Panc1 (cell line): ENCODE measurements at regions of chr5 and their contacts with region 1.

Region 1: DNA sequence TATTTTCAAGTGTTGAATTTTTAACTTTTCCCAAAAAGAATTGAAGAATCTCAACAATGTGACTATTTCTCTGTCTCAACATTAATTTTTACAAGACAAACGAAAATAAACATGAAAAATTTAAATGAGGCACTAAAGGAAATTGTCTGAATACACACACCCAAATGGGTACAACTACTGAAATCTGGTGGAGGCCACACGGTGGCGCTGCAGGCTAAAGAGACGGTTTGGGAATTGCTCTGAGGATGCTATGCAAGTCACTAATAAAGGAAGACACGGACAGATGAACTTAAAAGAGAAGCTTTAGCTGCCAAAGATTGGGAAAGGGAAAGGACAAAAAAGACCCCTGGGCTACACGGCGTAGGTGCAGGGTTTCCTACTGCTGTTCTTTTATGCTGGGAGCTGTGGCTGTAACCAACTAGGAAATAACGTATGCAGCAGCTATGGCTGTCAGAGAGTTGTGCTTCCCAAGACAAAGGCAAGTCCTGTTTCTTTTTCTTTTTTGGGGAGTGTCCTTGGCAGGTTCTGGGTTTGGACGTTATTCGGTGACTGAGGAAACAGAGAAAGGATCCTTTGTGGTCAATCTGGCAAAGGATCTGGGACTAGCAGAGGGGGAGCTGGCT is at the start of gene PCDHB10:
- DNase-seq: no peak
- ATAC-seq: peak; percentile 85
- H3K4me3 ChIP-seq: peak within 1 kb of the TSS; percentile 17 to 21; a peak in 2 of 4 replicates
- H3K27ac ChIP-seq: no peak within 1 kb of the TSS
- H3K4me1 ChIP-seq: no peaks in the 10 kb centered on the region
- H3K27me3 ChIP-seq: peaks cover 2% of the 10 kb centered on the region
- CTCF ChIP-seq: peak; percentile 84
- total RNA-seq, gene PCDHB10: 0.72 TPM

Region 2: GRCh38 chr5:141084487-141084990 is 107.7 kb before region 1 on chr5:
- CTCF ChIA-PET with region 1: interaction called, 3 read pairs
- POLR2A ChIA-PET with region 1: no interaction called
- in situ Hi-C with region 1: loop called (anchors 25 kb)
- intact Hi-C with region 1: no loop called
- DNase-seq: peak; percentile 53
- ATAC-seq: peak; percentile 100
- H3K4me3 ChIP-seq: peak overlapping the region; percentile 66 to 75
- H3K27ac ChIP-seq: peak overlapping the region; percentile 86
- H3K4me1 ChIP-seq: peaks cover 3% of the 10 kb centered on the region
- H3K27me3 ChIP-seq: peaks cover 2% of the 10 kb centered on the region; the same call in 1 of the 2 replicates
- CTCF ChIP-seq: peak; percentile 89

Region 3: DNA sequence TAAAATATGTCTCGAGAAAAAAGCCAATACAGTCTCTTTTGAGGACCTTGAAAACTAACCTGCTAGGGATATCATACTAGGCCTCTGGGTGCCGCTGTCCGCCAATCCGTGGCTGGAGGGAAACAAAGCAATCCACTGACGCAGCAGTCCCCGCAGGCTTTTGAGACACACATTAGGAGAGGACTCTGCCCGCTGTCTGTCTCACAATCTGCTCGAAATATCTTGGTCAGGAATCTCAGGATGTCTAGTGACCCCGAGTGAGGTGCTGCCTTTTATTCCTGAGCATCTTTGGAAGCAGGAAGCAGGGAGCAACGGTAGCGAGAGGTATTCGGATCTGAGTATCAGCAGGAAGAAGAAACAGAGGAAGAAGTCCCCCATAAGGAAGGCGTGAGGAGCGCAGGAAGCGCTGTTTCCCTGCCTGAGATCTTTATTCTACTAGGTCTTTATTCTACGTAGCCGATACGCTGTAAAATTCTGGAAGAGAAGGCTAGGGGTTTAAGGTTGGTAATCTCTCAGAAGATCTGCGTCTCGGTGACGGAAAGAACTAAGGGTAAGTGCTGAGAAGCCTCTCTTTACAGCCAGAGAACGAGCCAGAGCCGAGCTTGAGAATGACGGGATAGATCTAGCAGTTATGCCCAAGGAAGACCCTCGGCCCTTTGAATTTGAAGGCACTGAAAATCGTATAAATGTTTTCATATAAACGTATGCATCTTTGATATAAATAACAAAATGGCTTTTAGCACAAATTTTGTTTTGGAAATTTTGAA is 134.1 kb after region 1 on chr5:
- CTCF ChIA-PET with region 1: no interaction called
- POLR2A ChIA-PET with region 1: no interaction called
- in situ Hi-C with region 1: loop called (anchors 25 kb)
- intact Hi-C with region 1: no loop called
- DNase-seq: no peak
- ATAC-seq: peak; percentile 94
- H3K4me3 ChIP-seq: peak overlapping the region; percentile 50 to 77
- H3K27ac ChIP-seq: peak overlapping the region; percentile 73
- H3K4me1 ChIP-seq: no peaks in the 10 kb centered on the region
- H3K27me3 ChIP-seq: no peaks in the 10 kb centered on the region
- CTCF ChIP-seq: peak; percentile 82